ENCODE measurements at regions of chr18 and their contacts with region 1.

Region 1: GRCh38 chr18:69538849-69539248 is 138.2 kb downstream of the DOK6 start:
- DNase-seq: no peak
- ATAC-seq: no peak
- H3K4me3 ChIP-seq: no peak overlapping the region
- H3K27ac ChIP-seq: no peak overlapping the region
- H3K4me1 ChIP-seq: no peaks in the 10 kb centered on the region
- H3K27me3 ChIP-seq: no peaks in the 10 kb centered on the region
- CTCF ChIP-seq: no peak
- EP300 ChIP-seq: no peak
- POLR2A ChIP-seq: no peak
- RAD21 ChIP-seq: no peak

Region 2: DNA sequence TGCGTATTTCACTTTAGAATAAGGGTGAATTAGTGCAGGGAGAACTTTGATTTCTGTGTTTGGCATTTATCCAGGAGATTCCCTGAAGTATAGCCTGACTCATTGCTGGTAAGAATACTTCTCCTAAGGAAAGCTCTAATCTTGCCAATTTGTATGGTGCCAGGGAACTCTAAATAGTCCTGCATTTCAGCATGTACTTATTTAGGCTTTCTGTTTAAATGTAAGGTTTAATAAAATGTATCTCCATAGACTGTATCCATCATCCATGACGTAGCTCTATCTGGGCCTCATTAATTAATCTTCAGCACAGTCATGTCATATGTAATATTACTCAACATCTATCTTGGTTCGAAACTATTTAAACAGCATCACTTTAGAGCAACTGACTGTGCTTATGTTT is 10.4 kb before region 1 on chr18:
- CTCF ChIA-PET with region 1: no interaction called
- POLR2A ChIA-PET with region 1: no interaction called
- in situ Hi-C with region 1: no loop called
- intact Hi-C with region 1: loop called (anchors 1 kb)
- DNase-seq: no peak
- ATAC-seq: no peak
- H3K4me3 ChIP-seq: no peak overlapping the region
- H3K27ac ChIP-seq: no peak overlapping the region
- H3K4me1 ChIP-seq: peaks cover 5% of the 10 kb centered on the region; the same call in 1 of the 2 replicates
- H3K27me3 ChIP-seq: no peaks in the 10 kb centered on the region
- CTCF ChIP-seq: no peak
- EP300 ChIP-seq: no peak
- POLR2A ChIP-seq: no peak
- RAD21 ChIP-seq: no peak